ENCODE measurements at regions of chr1 and their contacts with region 1.

Region 1: DNA sequence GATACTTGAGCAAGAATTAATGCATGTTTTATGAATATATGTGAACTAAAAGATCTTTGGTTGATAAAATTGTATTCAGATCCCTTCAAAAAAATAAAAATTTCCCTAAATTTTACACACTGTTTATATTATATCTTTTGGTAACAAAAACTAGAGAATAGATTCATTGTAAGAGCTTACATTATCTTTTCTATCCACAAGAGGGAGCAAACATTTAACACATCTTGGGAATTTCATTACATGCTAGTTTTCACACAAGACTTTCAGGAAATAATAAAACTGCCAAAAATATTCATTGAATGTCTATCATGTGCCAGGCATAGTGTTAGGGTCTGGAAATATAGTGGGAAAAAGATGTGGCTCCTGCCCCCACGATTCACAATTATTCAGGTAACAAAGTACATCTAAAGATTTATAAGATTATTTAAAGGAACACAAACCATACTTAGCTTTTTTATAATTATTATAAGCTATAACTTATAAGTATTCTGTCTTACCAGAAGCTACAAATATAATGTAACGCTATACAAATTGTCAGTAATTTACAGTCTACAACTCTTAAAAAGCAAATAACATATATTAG is 30.6 kb downstream of the FAF1 start:
- DNase-seq: peak; percentile 6
- H3K4me3 ChIP-seq: no peak overlapping the region
- H3K27ac ChIP-seq: no peak overlapping the region
- H3K27me3 ChIP-seq: no peaks in the 10 kb centered on the region
- CTCF ChIP-seq: peak; percentile 56

Region 2: GRCh38 chr1:50646526-50646925 is 282.9 kb before region 1 on chr1:
- CTCF ChIA-PET with region 1: no interaction called
- POLR2A ChIA-PET with region 1: no interaction called
- DNase-seq: no peak
- H3K4me3 ChIP-seq: no peak overlapping the region
- H3K27ac ChIP-seq: no peak overlapping the region
- H3K27me3 ChIP-seq: no peaks in the 10 kb centered on the region
- CTCF ChIP-seq: no peak

Region 3: GRCh38 chr1:50658459-50659076 is 270.9 kb before region 1 on chr1:
- CTCF ChIA-PET with region 1: no interaction called
- POLR2A ChIA-PET with region 1: no interaction called
- DNase-seq: no peak
- H3K4me3 ChIP-seq: no peak overlapping the region
- H3K27ac ChIP-seq: no peak overlapping the region
- H3K27me3 ChIP-seq: no peaks in the 10 kb centered on the region
- CTCF ChIP-seq: no peak

Region 4: DNA sequence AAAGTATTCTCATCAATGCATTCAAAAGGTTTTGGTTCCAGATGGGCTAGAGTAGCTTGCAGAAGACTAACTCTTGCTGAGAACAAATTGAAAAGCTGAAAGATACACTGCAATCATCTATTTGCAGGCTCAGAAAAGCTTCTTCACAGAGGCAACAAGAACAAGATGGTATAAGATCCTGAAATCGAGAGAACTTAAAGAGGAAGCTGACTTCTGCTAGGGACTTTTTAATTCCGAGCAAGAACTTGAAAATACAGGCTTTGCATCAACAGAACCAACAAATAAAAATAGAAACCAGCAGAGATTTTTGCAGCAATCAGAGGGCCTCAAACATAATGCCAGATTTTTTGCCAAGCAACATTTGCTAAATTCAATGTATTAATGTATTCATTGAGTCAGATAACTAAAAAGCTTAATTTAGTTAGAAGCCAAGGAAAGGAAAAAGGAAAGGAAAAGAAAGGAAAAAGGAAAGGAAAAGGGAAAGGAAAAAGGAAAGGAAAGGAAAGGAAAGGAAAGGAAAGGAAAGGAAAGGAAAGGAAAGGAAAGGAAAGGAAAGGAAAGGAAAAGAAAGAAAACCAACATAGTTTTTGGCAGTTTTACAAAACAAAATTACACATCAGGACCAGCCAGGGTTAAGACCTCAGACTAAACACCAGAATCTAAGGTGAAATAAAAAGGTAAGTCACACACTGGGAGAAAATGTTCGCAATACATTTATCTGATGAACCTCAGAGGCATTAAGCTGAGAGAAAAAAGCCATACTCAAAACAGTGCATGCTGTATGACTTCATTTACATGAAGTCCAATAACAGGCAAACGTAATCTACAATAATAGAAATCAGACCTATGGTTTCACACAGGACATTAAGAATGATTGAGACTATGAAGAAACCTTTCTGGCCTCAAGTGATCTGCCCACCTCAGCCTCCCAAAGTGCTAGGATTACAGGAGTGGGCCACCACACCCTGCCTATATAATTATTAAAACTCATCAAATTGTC is 12.0 kb before region 1 on chr1:
- CTCF ChIA-PET with region 1: interaction called, 18 read pairs
- POLR2A ChIA-PET with region 1: no interaction called
- DNase-seq: no peak
- H3K4me3 ChIP-seq: no peak overlapping the region
- H3K27ac ChIP-seq: no peak overlapping the region
- H3K27me3 ChIP-seq: no peaks in the 10 kb centered on the region
- CTCF ChIP-seq: no peak

Region 5: DNA sequence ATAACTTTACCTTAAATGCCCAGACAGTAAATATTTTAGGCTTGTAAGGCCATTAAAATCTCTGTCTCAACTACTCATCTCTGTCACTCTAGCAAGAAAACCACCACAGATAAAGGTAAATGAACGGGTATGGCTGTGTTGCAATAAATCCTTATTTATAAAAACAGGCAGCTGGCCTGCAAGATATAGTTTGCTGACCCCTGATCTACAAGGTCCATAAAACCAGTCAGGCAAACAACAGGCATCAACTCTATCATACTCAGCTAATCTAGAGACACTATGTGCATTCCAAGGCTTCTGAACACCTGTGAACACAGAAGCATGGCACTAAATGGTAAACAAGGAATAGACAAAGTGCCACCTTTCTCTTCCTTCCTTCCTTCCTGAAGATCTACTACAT is 20.9 kb after region 1 on chr1:
- CTCF ChIA-PET with region 1: interaction called, 59 read pairs
- POLR2A ChIA-PET with region 1: no interaction called
- DNase-seq: no peak
- H3K4me3 ChIP-seq: no peak overlapping the region
- H3K27ac ChIP-seq: no peak overlapping the region
- H3K27me3 ChIP-seq: no peaks in the 10 kb centered on the region
- CTCF ChIP-seq: no peak

Region 6: DNA sequence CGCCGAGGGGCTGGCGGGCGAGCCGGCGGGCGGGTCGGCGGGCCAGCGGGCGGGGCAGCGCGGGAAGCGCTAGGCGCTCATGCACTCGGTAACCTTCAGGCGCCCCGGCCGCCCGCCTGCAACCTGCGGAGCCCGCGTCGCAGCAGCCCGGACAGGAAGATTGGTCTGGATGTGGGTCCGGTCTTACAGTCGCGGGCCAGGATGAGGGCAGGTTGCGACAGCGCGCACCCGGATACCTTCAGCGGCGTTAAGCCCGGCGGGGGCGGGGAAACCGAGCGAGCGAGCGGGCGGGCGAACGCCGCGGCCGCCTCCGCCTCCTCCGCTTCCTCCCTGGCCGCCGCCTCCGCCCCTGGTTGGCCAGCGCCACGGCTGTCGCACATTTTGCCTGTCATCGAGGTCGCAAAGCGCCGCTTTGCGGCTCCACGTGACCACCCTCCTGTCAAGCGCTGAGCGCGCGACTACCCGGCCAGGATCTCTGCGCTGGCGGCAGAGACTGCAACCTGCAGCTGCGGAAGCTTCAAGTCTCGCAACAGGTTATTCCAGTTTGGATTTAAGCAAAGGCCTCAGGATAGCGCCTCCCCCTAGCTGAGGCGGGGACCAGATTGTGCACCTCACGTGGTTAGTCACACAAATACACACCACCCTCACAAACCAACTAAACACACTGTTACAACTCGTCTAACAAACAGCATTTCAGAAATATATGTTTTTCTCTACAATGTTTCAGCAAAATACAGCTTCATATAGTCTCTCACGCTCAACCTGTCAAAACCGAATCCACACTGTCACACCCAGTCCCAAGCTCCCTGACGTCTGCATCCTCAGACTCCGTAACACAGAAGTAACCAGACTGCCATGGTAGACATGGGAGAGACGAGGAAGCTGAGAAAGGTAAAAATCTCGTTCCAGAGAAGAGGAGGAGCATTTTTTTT is 30.7 kb after region 1 on chr1 and contains the start of gene FAF1:
- CTCF ChIA-PET with region 1: interaction called, 14 read pairs
- POLR2A ChIA-PET with region 1: no interaction called
- DNase-seq: peak; percentile 78
- H3K4me3 ChIP-seq: peak within 1 kb of the TSS; percentile 72
- H3K27ac ChIP-seq: peak within 1 kb of the TSS; percentile 33
- H3K27me3 ChIP-seq: no peaks in the 10 kb centered on the region
- CTCF ChIP-seq: peak; percentile 25; the same call in 1 of the 2 replicates
- polyA plus RNA-seq, gene FAF1: 37.9 and 40.2 TPM in 2 replicates